CD4-positive, alpha-beta memory T cell (primary cell): ENCODE measurements at regions of chr10 and their contacts with region 1.

Region 1: DNA sequence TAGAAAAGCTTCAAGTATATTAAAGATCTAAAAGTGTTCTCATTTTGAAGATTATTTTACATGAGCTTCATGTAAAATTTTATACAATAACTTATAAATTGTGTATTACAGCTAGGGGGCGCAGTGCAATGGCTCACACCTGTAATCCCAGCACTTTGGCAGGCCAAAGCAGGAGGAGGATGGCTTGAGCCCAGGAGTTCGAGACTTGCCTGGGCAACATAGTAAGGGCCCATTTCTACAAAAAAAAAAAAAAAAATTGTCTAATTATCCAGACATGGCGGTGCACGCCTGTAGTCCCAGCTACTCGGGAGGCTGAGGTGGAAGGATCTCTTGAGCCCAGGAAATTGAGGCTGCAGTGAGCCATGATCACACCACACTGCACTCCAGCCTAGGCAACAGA is 16.6 kb downstream of the ACBD5 start:
- DNase-seq: peak; percentile 37 to 56 (median 51)
- H3K4me3 ChIP-seq: no peak overlapping the region
- H3K4me3 Mint-ChIP-seq: peak overlapping the region in 2 of 8 donors; percentile 26 to 31
- H3K27ac ChIP-seq: no peak overlapping the region
- H3K27ac Mint-ChIP-seq: peak overlapping the region in 6 of 7 donors; percentile 37 to 87 (median 75)
- H3K4me1 ChIP-seq: peaks cover 24% of the 10 kb centered on the region
- H3K4me1 Mint-ChIP-seq: peaks cover 8 to 24% (median 16%) of the 10 kb centered on the region in 4 donors
- H3K27me3 ChIP-seq: no peaks in the 10 kb centered on the region
- H3K27me3 Mint-ChIP-seq: no peaks in the 10 kb centered on the region

Region 2: DNA sequence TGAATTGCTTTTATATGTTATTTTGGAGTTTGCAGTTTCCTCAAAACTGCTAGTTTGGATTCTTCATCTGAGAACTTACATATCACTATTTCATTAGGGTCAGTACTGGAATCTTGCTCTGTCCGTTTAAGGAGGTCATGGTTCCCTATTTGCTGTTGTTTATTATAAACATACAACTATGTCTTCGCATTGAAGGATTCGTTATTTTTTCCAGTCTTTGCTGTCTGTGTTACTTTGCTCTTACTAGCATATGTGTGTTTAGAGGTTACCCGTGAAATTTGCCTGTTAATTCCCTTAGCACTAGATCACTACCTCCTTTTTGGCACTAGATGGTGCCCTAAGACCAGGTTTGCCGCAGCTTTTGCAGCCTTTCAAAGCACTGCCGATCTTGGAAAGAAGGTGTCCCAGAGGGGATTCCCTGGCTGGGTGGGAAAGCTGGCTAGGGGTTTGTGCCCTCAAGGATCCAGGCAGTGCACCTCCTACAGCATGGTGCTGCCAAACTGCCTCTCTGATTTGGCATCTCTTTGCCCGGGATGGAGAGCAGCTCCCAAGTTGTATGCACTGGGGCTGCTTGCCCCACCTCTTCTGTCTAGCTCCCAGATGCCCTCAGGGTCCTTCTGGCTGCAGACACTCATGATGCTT is 888.9 kb before region 1 on chr10:
- CTCF ChIA-PET with region 1: interaction called, 3 read pairs
- POLR2A ChIA-PET with region 1: no interaction called
- intact Hi-C with region 1: loop called (anchors 10 kb)
- DNase-seq: peak; percentile 66 to 74 (median 72)
- H3K4me3 ChIP-seq: peak overlapping the region; percentile 38 to 53
- H3K4me3 Mint-ChIP-seq: peak overlapping the region; percentile 76 to 93 (median 84)
- H3K27ac ChIP-seq: peak overlapping the region; percentile 5
- H3K27ac Mint-ChIP-seq: peak overlapping the region in 2 of 7 donors; percentile 61 to 79
- H3K4me1 ChIP-seq: peaks cover 4% of the 10 kb centered on the region
- H3K4me1 Mint-ChIP-seq: peaks cover 4 to 8% (median 6%) of the 10 kb centered on the region in 4 donors
- H3K27me3 ChIP-seq: no peaks in the 10 kb centered on the region
- H3K27me3 Mint-ChIP-seq: peaks cover 0 to 2% of the 10 kb centered on the region in 2 donors

Region 3: GRCh38 chr10:27241652-27242472 is 17.9 kb after region 1 on chr10:
- CTCF ChIA-PET with region 1: interaction called, 65 read pairs
- POLR2A ChIA-PET with region 1: interaction called, 8 read pairs
- intact Hi-C with region 1: loop called (anchors 1 kb)
- DNase-seq: peak; percentile 85 to 88 (median 87)
- H3K4me3 ChIP-seq: peak overlapping the region; percentile 66 to 94
- H3K4me3 Mint-ChIP-seq: peak overlapping the region; percentile 95 to 99 (median 99)
- H3K27ac ChIP-seq: peak overlapping the region; percentile 89
- H3K27ac Mint-ChIP-seq: peak overlapping the region; percentile 98 to 100 (median 99)
- H3K4me1 ChIP-seq: peaks cover 36% of the 10 kb centered on the region
- H3K4me1 Mint-ChIP-seq: peaks cover 20 to 54% (median 31%) of the 10 kb centered on the region in 4 donors
- H3K27me3 ChIP-seq: no peaks in the 10 kb centered on the region
- H3K27me3 Mint-ChIP-seq: peaks cover 0 to 3% of the 10 kb centered on the region in 2 donors

Region 4: GRCh38 chr10:27258838-27259812 is 35.2 kb after region 1 on chr10:
- CTCF ChIA-PET with region 1: interaction called, 4 read pairs
- POLR2A ChIA-PET with region 1: interaction called, 4 read pairs
- intact Hi-C with region 1: loop called (anchors 1 kb)
- DNase-seq: peak in 2 of 5 donors; percentile 11 to 23
- H3K4me3 ChIP-seq: peak overlapping the region; percentile 17 to 55
- H3K4me3 Mint-ChIP-seq: peak overlapping the region; percentile 83 to 98 (median 93)
- H3K27ac ChIP-seq: no peak overlapping the region
- H3K27ac Mint-ChIP-seq: peak overlapping the region; percentile 17 to 90 (median 63)
- H3K4me1 ChIP-seq: peaks cover 21% of the 10 kb centered on the region
- H3K4me1 Mint-ChIP-seq: peaks cover 19 to 29% (median 23%) of the 10 kb centered on the region in 4 donors
- H3K27me3 ChIP-seq: peaks cover 28% of the 10 kb centered on the region
- H3K27me3 Mint-ChIP-seq: peaks cover 22 to 28% of the 10 kb centered on the region in 2 donors

Region 5: GRCh38 chr10:27360581-27361172 is 136.7 kb after region 1 on chr10:
- CTCF ChIA-PET with region 1: interaction called, 86 read pairs
- POLR2A ChIA-PET with region 1: no interaction called
- intact Hi-C with region 1: loop called (anchors 1 kb)
- DNase-seq: peak; percentile 78 to 81 (median 81)
- H3K4me3 ChIP-seq: no peak overlapping the region
- H3K4me3 Mint-ChIP-seq: no peak overlapping the region
- H3K27ac ChIP-seq: no peak overlapping the region
- H3K27ac Mint-ChIP-seq: no peak overlapping the region
- H3K4me1 ChIP-seq: no peaks in the 10 kb centered on the region
- H3K4me1 Mint-ChIP-seq: no peaks in the 10 kb centered on the region
- H3K27me3 ChIP-seq: no peaks in the 10 kb centered on the region
- H3K27me3 Mint-ChIP-seq: no peaks in the 10 kb centered on the region